HepG2 (cell line): ENCODE measurements at regions of chrX and their contacts with region 1.

Region 1: GRCh38 chrX:10189317-10190268 is 32.8 kb downstream of the CLCN4 start:
- DNase-seq: peak; percentile 57
- ATAC-seq: peak; percentile 94
- H3K4me3 ChIP-seq: no peak overlapping the region; a peak in 1 of 6 replicates
- H3K27ac ChIP-seq: peak overlapping the region; percentile 76
- H3K4me1 ChIP-seq: peaks cover 10% of the 10 kb centered on the region
- H3K27me3 ChIP-seq: no peaks in the 10 kb centered on the region
- CTCF ChIP-seq: peak; percentile 89
- EP300 ChIP-seq: no peak
- POLR2A ChIP-seq: no peak
- RAD21 ChIP-seq: peak; percentile 62; the same call in 1 of the 2 replicates

Region 2: DNA sequence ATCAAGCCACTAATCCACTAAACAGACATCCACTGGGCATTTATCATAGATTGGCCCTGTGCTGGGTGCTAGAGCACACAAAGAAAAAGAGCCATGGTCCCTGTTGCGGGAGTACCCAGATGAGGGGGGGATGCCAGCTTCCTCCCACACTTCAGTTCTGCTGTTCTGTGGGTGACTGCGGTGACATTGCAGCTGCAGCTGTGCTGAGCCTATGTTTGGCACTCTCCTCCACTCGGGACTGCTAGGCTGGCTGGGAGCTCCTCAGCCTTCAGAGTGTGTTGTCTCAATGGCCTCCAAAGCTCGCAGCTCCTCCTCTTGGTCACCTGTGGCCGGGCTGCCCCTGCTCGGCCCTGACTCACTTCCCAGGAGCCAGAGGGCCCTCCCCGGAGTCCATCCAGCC is 140.4 kb after region 1 on chrX:
- CTCF ChIA-PET with region 1: interaction called, 5 read pairs
- POLR2A ChIA-PET with region 1: no interaction called
- in situ Hi-C with region 1: loop called (anchors 10 kb)
- intact Hi-C with region 1: no loop called
- DNase-seq: no peak
- ATAC-seq: no peak
- H3K4me3 ChIP-seq: no peak overlapping the region
- H3K27ac ChIP-seq: no peak overlapping the region
- H3K4me1 ChIP-seq: peaks cover 7% of the 10 kb centered on the region
- H3K27me3 ChIP-seq: no peaks in the 10 kb centered on the region
- CTCF ChIP-seq: no peak
- EP300 ChIP-seq: no peak
- POLR2A ChIP-seq: no peak
- RAD21 ChIP-seq: no peak

Region 3: DNA sequence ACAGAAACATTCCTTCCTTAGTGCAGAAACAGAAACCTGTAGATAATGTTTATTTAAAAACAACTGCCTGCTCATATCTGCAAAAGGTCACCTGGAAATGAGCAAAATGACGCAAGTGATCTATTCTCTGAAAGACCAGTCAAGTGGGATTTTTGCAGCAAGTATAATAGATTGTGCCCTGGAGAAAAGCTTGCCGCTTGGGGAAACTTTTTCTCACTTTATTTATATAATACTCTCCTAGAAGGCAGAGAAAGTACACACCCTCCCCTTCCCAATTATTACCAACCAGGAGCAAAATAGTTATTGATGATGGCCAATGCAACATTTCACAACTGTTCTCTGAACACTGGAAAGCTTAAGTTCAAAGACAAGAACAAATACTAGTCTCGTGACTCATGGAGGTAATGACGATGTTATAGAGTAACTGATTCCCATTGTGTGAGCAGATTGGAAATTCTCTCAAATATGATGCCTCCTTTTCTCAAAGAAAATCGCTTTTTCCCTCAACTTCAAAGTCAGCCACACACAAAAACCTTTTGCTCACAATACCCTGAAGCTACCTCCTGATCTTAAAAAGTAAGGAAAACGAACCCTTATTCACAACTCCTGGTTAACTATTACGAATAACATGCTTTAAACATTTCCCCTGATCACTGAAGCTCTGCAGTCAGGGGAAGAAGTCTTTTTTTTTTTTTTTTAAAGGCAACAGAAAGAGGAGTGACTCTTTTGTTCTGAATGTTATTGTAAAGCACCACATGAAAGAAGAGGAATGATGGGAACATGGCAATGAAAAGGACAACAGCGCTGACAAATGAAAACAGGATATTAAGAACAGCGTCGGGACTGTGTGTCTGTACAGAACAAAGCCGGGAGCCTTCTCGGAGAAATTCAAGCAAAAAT is 389.8 kb after region 1 on chrX:
- CTCF ChIA-PET with region 1: no interaction called
- POLR2A ChIA-PET with region 1: no interaction called
- in situ Hi-C with region 1: no loop called
- intact Hi-C with region 1: no loop called
- DNase-seq: peak; percentile 62
- ATAC-seq: no peak
- H3K4me3 ChIP-seq: no peak overlapping the region; a peak in 1 of 6 replicates
- H3K27ac ChIP-seq: no peak overlapping the region
- H3K4me1 ChIP-seq: peaks cover 8% of the 10 kb centered on the region; the same call in 1 of the 2 replicates
- H3K27me3 ChIP-seq: no peaks in the 10 kb centered on the region
- CTCF ChIP-seq: no peak
- EP300 ChIP-seq: no peak
- POLR2A ChIP-seq: no peak
- RAD21 ChIP-seq: no peak

Region 4: DNA sequence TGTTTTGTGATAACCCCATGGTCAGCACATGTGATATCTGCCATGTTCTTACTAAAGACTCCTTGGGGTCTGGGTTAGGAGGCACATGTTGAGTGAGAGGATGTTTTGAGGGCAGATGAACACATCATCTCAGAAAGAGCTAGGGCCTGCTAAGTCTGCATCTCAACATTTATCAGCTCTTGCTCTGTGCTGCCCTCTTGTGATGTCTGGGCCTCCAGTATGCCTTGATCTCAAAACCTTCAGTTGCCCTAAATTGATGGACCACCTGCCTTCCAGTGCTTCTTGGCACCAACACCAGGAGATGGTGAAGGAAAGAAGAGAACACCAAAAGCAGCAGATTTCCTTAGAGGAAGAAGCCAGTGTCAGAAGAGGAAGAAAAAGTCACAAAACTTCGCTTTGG is 408.3 kb after region 1 on chrX:
- CTCF ChIA-PET with region 1: interaction called, 5 read pairs
- POLR2A ChIA-PET with region 1: no interaction called
- in situ Hi-C with region 1: no loop called
- intact Hi-C with region 1: loop called (anchors 5 kb)
- DNase-seq: peak; percentile 28
- ATAC-seq: peak; percentile 67
- H3K4me3 ChIP-seq: no peak overlapping the region
- H3K27ac ChIP-seq: no peak overlapping the region
- H3K4me1 ChIP-seq: no peaks in the 10 kb centered on the region
- H3K27me3 ChIP-seq: no peaks in the 10 kb centered on the region
- CTCF ChIP-seq: peak; percentile 56
- EP300 ChIP-seq: no peak
- POLR2A ChIP-seq: no peak
- RAD21 ChIP-seq: 0 out of 2 replicates have a peak, but pooled peaks have one; percentile 20

Region 5: GRCh38 chrX:11100281-11101035 is 910.9 kb after region 1 on chrX:
- CTCF ChIA-PET with region 1: interaction called, 9 read pairs
- POLR2A ChIA-PET with region 1: no interaction called
- in situ Hi-C with region 1: loop called (anchors 10 kb)
- intact Hi-C with region 1: loop called (anchors 1 kb)
- DNase-seq: peak; percentile 76
- ATAC-seq: peak; percentile 90
- H3K4me3 ChIP-seq: no peak overlapping the region; a peak in 1 of 6 replicates
- H3K27ac ChIP-seq: peak overlapping the region; percentile 81
- H3K4me1 ChIP-seq: peaks cover 50% of the 10 kb centered on the region
- H3K27me3 ChIP-seq: no peaks in the 10 kb centered on the region
- CTCF ChIP-seq: peak; percentile 71
- EP300 ChIP-seq: 0 out of 4 replicates have a peak, but pooled peaks of 1 of the 2 experiments have one; percentile 6
- POLR2A ChIP-seq: no peak
- RAD21 ChIP-seq: peak; percentile 52; the same call in 1 of the 2 replicates

Region 6: DNA sequence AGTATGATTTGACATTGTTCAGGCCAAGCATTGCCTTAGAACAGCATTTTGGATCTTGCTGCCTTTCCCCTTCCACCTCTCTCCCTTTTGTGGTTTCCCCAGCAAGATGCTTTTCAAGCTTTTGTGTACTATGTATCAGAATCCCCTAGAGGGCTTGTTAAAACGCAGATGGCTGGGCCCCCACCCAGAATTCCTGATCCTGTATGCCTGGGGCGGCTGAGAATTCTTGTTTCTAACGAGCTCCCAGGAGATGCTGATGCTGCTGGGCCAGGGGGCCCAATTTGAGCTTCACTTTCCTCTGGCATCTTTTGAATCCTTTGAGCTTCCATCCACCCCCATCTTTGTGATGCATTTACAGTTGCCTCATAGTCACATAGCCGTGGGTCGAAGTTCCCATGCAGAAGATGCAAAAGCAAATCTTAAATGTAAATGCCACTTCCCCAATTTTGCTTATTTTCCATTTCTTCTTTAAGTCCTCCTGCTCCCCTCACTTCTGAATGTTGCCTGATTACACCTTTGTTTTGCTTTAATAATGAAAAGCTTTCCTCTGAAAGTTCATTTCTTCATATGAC is 940.0 kb after region 1 on chrX:
- CTCF ChIA-PET with region 1: no interaction called
- POLR2A ChIA-PET with region 1: no interaction called
- in situ Hi-C with region 1: loop called (anchors 5 kb)
- intact Hi-C with region 1: no loop called
- DNase-seq: no peak
- ATAC-seq: no peak
- H3K4me3 ChIP-seq: no peak overlapping the region
- H3K27ac ChIP-seq: no peak overlapping the region
- H3K4me1 ChIP-seq: no peaks in the 10 kb centered on the region
- H3K27me3 ChIP-seq: no peaks in the 10 kb centered on the region
- CTCF ChIP-seq: no peak
- EP300 ChIP-seq: no peak
- POLR2A ChIP-seq: no peak
- RAD21 ChIP-seq: no peak

Region 7: DNA sequence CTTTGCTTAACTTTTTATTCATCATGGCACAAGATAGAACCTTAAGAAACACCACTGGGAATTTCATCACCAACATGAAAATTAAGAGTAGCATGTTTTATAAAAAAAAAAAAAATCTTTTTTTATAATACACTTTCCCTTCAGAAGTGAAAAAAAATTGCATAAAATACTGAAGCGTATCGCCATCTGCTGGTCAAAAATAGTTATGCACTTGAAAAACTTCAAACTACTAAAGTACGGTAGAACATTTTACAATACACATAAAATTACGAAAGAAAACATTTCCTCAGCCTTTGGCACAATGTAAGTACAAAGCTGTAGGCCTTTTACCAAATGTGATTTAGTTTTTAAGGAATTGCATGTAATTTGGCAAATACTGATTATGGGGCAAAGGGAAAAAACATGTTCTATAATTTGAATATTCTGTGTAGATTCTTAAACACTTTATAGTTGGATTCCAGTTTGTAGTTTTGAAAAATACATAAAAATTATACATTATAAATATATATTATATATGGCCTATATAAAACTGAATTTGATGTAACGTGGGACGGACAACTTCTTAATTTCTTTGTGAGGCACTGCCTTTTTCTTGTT is 948.0 kb after region 1 on chrX:
- CTCF ChIA-PET with region 1: interaction called, 21 read pairs
- POLR2A ChIA-PET with region 1: no interaction called
- in situ Hi-C with region 1: loop called (anchors 5 kb)
- intact Hi-C with region 1: loop called (anchors 1 kb)
- DNase-seq: peak; percentile 1
- ATAC-seq: no peak
- H3K4me3 ChIP-seq: no peak overlapping the region
- H3K27ac ChIP-seq: no peak overlapping the region
- H3K4me1 ChIP-seq: peaks cover 8% of the 10 kb centered on the region; the same call in 1 of the 2 replicates
- H3K27me3 ChIP-seq: no peaks in the 10 kb centered on the region
- CTCF ChIP-seq: peak; percentile 34
- EP300 ChIP-seq: no peak
- POLR2A ChIP-seq: no peak
- RAD21 ChIP-seq: no peak